Activated CD8-positive, alpha-beta T cell treated with anti-CD3 and anti-CD28 coated beads for 36 hours (primary cell): ENCODE measurements at regions of chr21 and their contacts with region 1.

Region 1: DNA sequence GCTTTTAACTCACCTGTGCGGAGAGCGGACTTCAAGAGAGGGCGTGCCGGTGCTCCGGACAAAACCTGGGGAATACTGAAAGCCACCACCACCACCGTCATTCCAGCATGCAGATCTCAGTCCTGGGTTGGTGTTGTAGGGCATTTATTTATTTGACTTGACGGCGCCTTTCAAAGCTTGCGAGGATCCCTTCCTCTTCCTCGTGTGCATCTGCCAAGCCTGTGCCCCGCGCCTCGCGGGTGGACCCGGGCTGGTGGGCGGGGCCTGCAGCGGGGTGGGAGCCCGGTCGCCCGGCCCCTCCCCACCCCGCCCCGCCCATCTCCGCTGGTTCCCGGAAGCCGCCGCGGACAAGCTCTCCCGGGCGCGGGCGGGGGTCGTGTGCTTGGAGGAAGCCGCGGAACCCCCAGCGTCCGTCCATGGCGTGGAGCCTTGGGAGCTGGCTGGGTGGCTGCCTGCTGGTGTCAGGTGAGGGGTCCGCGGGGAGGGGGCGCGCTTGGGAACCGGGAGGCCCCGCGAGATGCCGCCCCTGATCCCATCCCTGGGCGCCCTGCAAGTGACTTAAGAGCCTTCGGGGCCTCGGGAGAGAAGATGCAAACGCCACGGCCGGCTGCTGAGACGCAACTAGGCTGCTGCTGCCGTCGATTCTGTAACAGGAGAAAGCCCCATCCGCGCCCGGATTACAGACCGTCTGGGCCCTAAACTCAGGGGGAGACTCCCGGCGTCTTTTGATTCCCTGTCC is at the start of gene IL10RB:
- DNase-seq: peak; percentile 70
- ATAC-seq: peak; percentile 83
- H3K4me3 Mint-ChIP-seq: peak within 1 kb of the TSS; percentile 97
- H3K27ac Mint-ChIP-seq: peak within 1 kb of the TSS; percentile 97
- H3K4me1 Mint-ChIP-seq: peaks cover 56% of the 10 kb centered on the region
- H3K27me3 Mint-ChIP-seq: no peaks in the 10 kb centered on the region
- CTCF ChIP-seq: no peak
- total RNA-seq, gene IL10RB: 25.0 to 30.5 TPM

Region 2: GRCh38 chr21:33230545-33231398 is 35.4 kb before region 1 on chr21:
- CTCF ChIA-PET with region 1: interaction called, 3 read pairs
- POLR2A ChIA-PET with region 1: interaction called, 10 read pairs
- intact Hi-C with region 1: no loop called
- DNase-seq: peak; percentile 46
- ATAC-seq: peak; percentile 16
- H3K4me3 Mint-ChIP-seq: peak overlapping the region; percentile 87
- H3K27ac Mint-ChIP-seq: peak overlapping the region; percentile 90
- H3K4me1 Mint-ChIP-seq: peaks cover 52% of the 10 kb centered on the region
- H3K27me3 Mint-ChIP-seq: no peaks in the 10 kb centered on the region
- CTCF ChIP-seq: no peak

Region 3: DNA sequence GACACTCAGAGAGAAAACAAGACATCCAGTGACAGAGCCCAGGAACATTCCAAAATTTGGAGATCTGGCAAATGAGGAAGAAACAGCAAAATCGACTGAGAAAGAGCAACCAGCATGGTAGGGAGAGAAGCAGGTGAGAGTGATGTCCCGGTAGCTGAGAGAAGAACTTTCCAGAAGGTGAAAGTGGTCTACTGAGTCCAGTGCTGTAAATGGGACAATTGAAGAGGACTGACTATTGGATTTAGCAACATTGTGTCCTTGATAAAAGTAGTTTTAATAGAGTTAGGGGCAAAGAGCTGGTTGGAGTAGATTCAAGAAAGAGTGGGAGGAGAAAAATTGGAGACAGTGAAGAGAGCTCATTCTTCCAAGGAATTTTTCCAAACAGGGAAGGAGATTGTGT is 15.1 kb before region 1 on chr21:
- CTCF ChIA-PET with region 1: interaction called, 7 read pairs
- POLR2A ChIA-PET with region 1: interaction called, 10 read pairs
- intact Hi-C with region 1: no loop called
- DNase-seq: no peak
- ATAC-seq: no peak
- H3K4me3 Mint-ChIP-seq: no peak overlapping the region
- H3K27ac Mint-ChIP-seq: peak overlapping the region; percentile 63
- H3K4me1 Mint-ChIP-seq: peaks cover 53% of the 10 kb centered on the region
- H3K27me3 Mint-ChIP-seq: no peaks in the 10 kb centered on the region
- CTCF ChIP-seq: no peak

Region 4: DNA sequence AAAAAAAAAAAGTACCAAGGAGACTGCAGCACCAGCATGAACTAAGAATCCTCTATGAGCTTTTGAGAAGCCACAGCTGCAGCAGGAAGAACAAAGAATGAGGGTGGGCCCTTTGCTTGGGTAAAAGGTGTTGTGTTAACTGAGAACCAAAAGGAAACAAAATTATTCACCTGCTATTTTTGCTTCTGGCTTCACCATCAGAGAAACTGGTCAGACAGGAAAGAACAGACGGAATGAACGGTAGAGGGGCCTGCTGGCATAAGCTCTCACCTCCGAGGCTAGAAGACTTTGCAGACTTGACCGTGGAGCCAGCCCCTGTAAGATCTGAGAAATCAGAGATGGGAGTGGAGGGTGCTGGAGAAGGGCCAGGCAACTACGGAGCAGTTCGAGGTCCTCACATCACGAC is 27.6 kb after region 1 on chr21:
- CTCF ChIA-PET with region 1: no interaction called
- POLR2A ChIA-PET with region 1: interaction called, 3 read pairs
- intact Hi-C with region 1: loop called (anchors 2 kb)
- DNase-seq: no peak
- ATAC-seq: peak; percentile 27
- H3K4me3 Mint-ChIP-seq: no peak overlapping the region
- H3K27ac Mint-ChIP-seq: peak overlapping the region; percentile 25
- H3K4me1 Mint-ChIP-seq: peaks cover 28% of the 10 kb centered on the region
- H3K27me3 Mint-ChIP-seq: no peaks in the 10 kb centered on the region
- CTCF ChIP-seq: no peak